ENCODE measurements at regions of chr3 and their contacts with region 1.

Region 1: DNA sequence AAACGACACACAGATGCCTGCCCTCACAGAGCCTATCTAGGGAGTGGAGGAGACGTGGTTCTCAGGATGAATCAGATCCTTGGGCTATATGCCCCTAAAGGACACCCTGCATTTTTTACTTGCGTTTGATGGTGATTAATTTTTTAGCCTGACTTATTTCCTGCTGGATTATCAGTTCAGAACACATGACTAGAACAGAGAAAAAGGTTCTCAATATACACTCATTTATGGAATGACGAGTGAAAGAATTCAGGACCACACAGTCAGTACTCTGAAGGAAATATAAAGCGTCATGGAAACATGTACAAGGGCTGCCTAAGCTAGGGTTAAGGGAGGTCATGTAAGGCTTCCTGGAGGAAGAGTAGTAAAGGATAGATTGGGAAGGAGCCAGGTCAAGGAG is 121.8 kb downstream of the SSR3 start:
- DNase-seq: no peak

Region 2: GRCh38 chr3:156509189-156510174 is 76.3 kb after region 1 on chr3:
- in situ Hi-C with region 1: loop called (anchors 10 kb)
- DNase-seq: peak; percentile 73

Measured in SK-MEL-5 (cell line).